Panc1 (cell line): ENCODE measurements at regions of chr12 and their contacts with region 1.

Region 1: DNA sequence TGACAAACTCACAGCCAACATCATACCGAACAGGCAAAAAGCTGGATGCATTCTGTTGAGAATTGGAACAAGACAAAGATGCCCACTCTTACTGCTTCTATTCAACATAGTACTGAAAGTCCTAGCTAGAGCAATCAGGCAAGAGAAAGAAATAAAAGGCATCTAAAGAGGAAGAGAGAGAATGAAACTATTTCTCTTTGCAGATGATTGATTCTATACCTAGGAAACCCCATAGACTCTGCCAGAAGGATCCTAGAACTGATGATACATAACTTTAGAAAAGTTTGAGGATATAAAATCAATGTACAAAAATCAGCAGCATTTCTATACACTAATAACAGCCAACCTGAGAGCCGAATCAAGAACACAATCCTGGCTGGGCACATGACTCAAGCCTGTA is 6.1 kb upstream of the ANO6 start:
- DNase-seq: no peak
- ATAC-seq: no peak
- H3K4me3 ChIP-seq: no peak overlapping the region
- H3K27ac ChIP-seq: no peak overlapping the region; the same call in 1 of the 2 replicates
- H3K4me1 ChIP-seq: peaks cover 2% of the 10 kb centered on the region; the same call in 1 of the 2 replicates
- H3K27me3 ChIP-seq: no peaks in the 10 kb centered on the region
- CTCF ChIP-seq: no peak

Region 2: DNA sequence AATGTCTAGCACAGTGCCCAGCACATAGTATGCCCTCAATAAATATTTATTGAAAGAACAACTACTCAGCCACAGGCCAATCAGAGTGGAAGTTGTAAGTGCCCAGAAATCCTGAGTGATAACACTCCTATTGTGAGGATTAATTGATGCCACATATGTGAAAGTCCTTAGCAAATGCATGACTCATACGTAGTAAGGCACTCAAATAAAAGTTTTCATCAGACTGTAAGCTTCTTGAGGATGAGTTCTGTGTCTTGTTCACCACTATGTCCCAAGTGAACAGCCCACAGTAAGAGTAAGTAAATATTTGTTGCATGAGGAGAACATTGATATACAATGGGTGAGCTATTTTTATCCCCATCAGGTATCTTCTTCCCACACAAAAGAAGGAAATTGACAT is 18.5 kb before region 1 on chr12:
- CTCF ChIA-PET with region 1: no interaction called
- POLR2A ChIA-PET with region 1: interaction called, 12 read pairs
- in situ Hi-C with region 1: no loop called
- intact Hi-C with region 1: no loop called
- DNase-seq: no peak
- ATAC-seq: no peak
- H3K4me3 ChIP-seq: no peak overlapping the region
- H3K27ac ChIP-seq: peak overlapping the region; percentile 10; the same call in 1 of the 2 replicates
- H3K4me1 ChIP-seq: peaks cover 11% of the 10 kb centered on the region; the same call in 1 of the 2 replicates
- H3K27me3 ChIP-seq: no peaks in the 10 kb centered on the region
- CTCF ChIP-seq: no peak

Region 3: DNA sequence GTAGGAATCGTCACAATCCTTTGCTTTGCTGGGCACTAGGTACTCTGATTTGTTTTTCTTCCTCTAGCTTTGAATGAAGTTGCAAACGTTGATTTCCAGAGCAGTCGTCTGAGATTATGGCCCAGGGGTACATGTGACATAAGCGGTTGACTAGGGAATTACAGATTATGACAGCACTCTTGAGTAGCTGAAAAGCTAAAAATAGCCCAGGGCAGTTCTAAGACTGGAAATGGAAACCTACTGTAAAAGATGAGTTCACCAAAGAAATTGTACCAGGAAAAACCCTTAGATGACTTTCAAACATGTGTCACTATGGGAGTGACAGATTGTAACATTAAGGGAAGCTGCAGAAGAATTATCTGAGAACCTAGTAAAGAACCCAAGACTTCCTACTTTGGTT is 114.6 kb after region 1 on chr12:
- CTCF ChIA-PET with region 1: no interaction called
- POLR2A ChIA-PET with region 1: no interaction called
- in situ Hi-C with region 1: no loop called
- intact Hi-C with region 1: no loop called
- DNase-seq: no peak
- ATAC-seq: no peak
- H3K4me3 ChIP-seq: no peak overlapping the region
- H3K27ac ChIP-seq: no peak overlapping the region
- H3K4me1 ChIP-seq: peaks cover 4% of the 10 kb centered on the region
- H3K27me3 ChIP-seq: no peaks in the 10 kb centered on the region
- CTCF ChIP-seq: no peak